Calu3 (cell line): ENCODE measurements at regions of chr3 and their contacts with region 1.

Region 1: DNA sequence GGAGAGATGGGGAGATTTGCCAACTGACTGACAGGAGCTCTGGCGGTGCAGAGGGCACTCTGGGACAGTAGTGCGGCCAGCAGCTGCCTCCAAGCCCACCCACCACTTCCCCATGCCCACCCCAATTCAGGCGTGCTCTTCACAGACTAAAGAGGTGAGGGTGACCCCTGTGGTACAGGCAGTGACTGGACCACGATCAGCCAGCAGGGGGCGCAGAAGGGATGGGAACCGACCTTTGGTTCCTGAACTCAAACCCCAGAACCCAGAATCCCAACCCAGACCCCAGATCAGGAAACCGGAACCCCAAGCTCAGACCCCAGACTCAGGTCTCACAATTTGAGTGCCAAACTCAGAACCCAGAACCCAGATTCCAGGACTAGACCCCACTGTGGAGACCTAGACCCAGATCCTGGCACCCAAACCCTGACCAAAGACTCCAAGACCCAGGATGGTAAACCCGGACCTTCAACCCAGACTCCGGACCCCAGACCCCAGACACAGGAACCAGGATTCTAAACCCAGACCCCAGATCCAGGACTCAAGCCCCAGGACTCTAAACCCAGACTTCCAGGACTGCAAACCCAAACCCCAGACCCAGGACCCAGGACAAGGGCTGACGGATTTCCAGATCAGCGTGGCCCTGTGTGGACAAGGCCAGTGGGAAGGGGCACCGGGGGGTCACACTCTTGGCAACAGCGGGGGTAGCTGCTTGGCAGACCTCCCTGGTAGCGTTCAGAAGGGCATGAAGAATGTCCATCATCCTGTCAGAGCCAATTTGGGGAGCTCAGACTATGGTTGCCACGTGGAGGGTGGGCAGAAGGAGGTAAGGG is 3.7 kb upstream of the MYL3 start:
- DNase-seq: peak; percentile 83
- H3K4me3 Mint-ChIP-seq: no peak overlapping the region
- H3K27ac Mint-ChIP-seq: no peak overlapping the region
- H3K4me1 Mint-ChIP-seq: no peaks in the 10 kb centered on the region
- H3K27me3 Mint-ChIP-seq: peaks cover 54% of the 10 kb centered on the region
- CTCF ChIP-seq: peak; percentile 78

Region 2: GRCh38 chr3:46909535-46910442 is 42.9 kb after region 1 on chr3:
- CTCF ChIA-PET with region 1: interaction called, 5 read pairs
- intact Hi-C with region 1: loop called (anchors 5 kb)
- DNase-seq: peak; percentile 86
- H3K4me3 Mint-ChIP-seq: no peak overlapping the region
- H3K27ac Mint-ChIP-seq: no peak overlapping the region
- H3K4me1 Mint-ChIP-seq: peaks cover 9% of the 10 kb centered on the region
- H3K27me3 Mint-ChIP-seq: no peaks in the 10 kb centered on the region
- CTCF ChIP-seq: peak; percentile 70